Stomach (tissue), 19 donors: ENCODE measurements at regions of chr11 and their contacts with region 1.

Region 1: DNA sequence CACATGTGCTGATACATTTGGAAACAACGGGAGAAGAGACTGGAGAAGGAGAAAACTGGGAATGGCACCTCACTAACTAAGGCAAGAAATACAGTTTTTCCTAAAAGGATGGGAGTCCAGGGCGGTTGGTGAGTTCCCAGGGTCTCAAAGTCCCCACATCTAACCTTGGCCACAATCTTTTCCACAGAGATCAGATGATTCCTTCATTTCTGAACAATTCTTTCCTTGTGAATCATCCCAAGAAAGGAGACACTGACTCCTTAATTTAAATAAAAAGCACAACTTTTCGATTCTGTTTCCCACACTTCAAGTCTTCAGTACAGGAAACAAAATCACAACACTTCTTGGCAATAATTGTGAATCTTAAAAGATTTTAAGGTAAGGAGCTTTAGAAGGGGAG is 384.7 kb downstream of the DCDC1 start:
- DNase-seq: no peak
- H3K4me3 ChIP-seq: no peak overlapping the region
- H3K27ac ChIP-seq: no peak overlapping the region
- H3K4me1 ChIP-seq: no peaks in the 10 kb centered on the region
- H3K27me3 ChIP-seq: no peaks in the 10 kb centered on the region
- CTCF ChIP-seq: no peak
- EP300 ChIP-seq: no peak
- POLR2A ChIP-seq: no peak

Region 2: DNA sequence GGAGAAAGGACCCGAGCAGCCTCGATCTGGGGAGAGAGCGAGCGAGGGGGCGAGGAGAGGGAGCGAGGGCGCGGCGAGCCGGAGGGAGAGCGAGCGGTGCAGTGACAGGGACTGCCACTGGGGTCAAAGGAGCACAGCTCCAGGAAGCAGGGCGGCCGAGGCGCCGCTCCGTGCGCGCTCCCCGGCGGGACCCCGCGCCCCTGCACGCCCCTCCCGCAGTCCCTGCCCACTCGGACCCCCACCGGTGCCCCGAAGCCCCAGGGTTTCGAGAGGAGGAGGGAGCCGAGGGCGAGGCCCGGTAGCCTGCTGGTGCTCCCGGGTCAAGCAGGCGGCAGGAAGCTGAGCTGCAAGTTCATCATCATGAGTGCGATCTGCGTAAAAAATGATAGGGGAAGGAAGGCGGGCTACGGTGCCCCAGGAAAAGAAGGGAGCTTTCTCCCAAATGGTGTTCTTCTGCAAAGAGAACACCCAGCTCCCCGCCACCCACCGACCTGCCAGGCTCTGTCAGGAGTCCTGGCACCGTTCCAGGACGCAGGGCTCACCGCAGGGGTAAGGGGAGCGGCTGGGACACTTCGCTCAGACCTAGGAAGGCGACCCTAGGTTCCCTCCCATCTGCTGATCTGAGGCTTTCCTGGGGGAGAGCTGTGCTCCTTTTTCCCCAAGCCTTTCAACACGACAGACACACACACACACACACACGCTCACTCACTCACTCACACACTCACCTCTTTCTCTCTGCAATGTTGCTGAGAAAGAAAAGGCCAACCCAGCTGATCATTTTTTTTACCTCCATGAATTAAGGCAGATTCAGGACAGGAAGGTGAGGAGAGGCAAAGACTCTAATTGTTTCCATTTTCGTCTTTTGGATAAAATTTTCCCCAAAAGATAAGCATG is 398.3 kb before region 1 on chr11 and contains the start of gene MPPED2:
- intact Hi-C with region 1: loop called (anchors 5 kb)
- DNase-seq: peak in 1 of 2 donors; percentile 80
- H3K4me3 ChIP-seq: peak within 1 kb of the TSS; percentile 65 to 71 (median 70)
- H3K27ac ChIP-seq: peak within 1 kb of the TSS in 4 of 5 donors; percentile 58 to 85 (median 62)
- H3K4me1 ChIP-seq: peaks cover 21 to 43% (median 29%) of the 10 kb centered on the region in 4 donors
- H3K27me3 ChIP-seq: peaks cover 4 to 56% (median 33%) of the 10 kb centered on the region in 3 donors
- CTCF ChIP-seq: peak in 3 of 7 experiments; percentile 18 to 39 (median 26)
- EP300 ChIP-seq: no peak
- POLR2A ChIP-seq: no peak
- total RNA-seq, gene MPPED2: 0.43 to 10.3 (median 4.1) TPM

Region 3: GRCh38 chr11:30879322-30880005 is 105.4 kb before region 1 on chr11:
- intact Hi-C with region 1: no loop called
- DNase-seq: peak; percentile 26 to 78
- H3K4me3 ChIP-seq: no peak overlapping the region
- H3K27ac ChIP-seq: no peak overlapping the region
- H3K4me1 ChIP-seq: peaks cover 0 to 14% (median 0%) of the 10 kb centered on the region in 4 donors
- H3K27me3 ChIP-seq: no peaks in the 10 kb centered on the region
- CTCF ChIP-seq: no peak
- EP300 ChIP-seq: no peak
- POLR2A ChIP-seq: no peak